ENCODE measurements at regions of chr20 and their contacts with region 1.

Region 1: DNA sequence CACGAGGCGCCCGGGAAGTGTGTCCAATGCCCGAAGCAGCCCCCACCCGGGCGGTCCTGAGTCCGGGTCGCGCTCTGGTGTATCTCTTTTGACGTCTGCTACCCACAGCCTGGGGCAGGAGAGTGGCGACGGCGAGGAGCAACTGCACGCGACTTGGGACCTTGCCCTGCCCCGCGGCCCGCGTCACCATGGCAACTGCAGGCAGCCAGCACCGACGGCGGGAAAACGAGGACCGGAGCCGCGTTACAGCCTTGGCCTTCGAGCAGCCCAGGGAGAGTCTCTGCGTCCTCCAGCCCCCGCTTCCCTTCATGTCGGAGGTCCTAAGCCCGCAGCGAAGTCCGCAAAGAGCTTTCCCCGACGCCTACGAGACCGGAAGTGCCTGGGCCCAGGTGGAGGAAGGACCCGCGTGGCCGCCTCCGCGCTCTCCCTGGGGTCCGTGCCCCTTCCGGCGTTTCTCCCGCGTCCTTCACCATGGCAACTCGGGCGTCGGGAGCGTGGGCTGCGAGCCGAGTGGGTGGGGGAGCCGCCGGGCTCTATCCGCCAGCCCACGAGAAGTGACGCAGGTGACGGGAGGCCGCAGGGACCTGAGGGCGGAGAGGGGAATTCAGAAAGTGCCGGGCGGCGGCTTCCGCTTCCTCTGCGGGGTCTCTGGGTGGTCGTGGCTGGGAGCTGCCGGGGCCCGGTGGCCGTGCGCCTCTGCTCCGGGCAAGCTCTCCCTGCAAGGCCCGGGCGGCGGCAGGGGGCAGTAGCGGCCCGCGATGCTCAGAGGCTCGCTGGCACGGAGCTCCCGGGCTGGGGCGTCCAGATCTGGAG is 88.6 kb upstream of the TGM3 start:
- DNase-seq: peak; percentile 64
- H3K4me3 Mint-ChIP-seq: peak overlapping the region; percentile 65
- H3K27ac Mint-ChIP-seq: no peak overlapping the region
- H3K4me1 Mint-ChIP-seq: no peaks in the 10 kb centered on the region
- H3K27me3 Mint-ChIP-seq: peaks cover 8% of the 10 kb centered on the region
- CTCF ChIP-seq: peak; percentile 93

Region 2: GRCh38 chr20:1389703-1390580 is 817.2 kb before region 1 on chr20:
- CTCF ChIA-PET with region 1: no interaction called
- POLR2A ChIA-PET with region 1: no interaction called
- intact Hi-C with region 1: no loop called
- DNase-seq: peak; percentile 38
- H3K4me3 Mint-ChIP-seq: peak overlapping the region; percentile 83
- H3K27ac Mint-ChIP-seq: peak overlapping the region; percentile 91
- H3K4me1 Mint-ChIP-seq: peaks cover 46% of the 10 kb centered on the region
- H3K27me3 Mint-ChIP-seq: no peaks in the 10 kb centered on the region
- CTCF ChIP-seq: no peak

Region 3: DNA sequence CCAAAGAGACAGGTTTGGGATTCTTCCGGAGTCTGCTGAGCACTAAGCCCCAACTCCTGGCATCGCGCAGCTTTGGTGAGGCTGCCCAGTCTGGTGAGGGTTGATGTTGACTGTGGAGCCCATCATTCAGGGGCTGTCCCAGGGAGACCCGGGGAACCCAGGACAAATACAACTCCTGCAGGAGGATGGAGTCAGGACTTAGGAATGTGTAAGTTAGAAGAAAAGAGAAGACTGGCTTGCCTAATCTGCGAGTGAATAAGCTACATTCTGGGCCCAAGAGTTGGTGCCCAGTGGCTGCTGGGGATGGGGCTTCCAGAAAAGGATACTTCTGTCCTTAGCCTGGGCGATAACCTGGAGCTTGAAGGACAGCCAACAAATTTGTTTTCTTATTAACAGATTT is 57.7 kb before region 1 on chr20:
- CTCF ChIA-PET with region 1: no interaction called
- POLR2A ChIA-PET with region 1: no interaction called
- intact Hi-C with region 1: no loop called
- DNase-seq: peak; percentile 18
- H3K4me3 Mint-ChIP-seq: no peak overlapping the region
- H3K27ac Mint-ChIP-seq: no peak overlapping the region
- H3K4me1 Mint-ChIP-seq: peaks cover 24% of the 10 kb centered on the region
- H3K27me3 Mint-ChIP-seq: no peaks in the 10 kb centered on the region
- CTCF ChIP-seq: no peak

Region 4: GRCh38 chr20:2217857-2218539 is 10.8 kb after region 1 on chr20:
- CTCF ChIA-PET with region 1: interaction called, 24 read pairs
- POLR2A ChIA-PET with region 1: interaction called, 4 read pairs
- intact Hi-C with region 1: no loop called
- DNase-seq: no peak
- H3K4me3 Mint-ChIP-seq: no peak overlapping the region
- H3K27ac Mint-ChIP-seq: no peak overlapping the region
- H3K4me1 Mint-ChIP-seq: no peaks in the 10 kb centered on the region
- H3K27me3 Mint-ChIP-seq: peaks cover 24% of the 10 kb centered on the region
- CTCF ChIP-seq: no peak

Region 5: DNA sequence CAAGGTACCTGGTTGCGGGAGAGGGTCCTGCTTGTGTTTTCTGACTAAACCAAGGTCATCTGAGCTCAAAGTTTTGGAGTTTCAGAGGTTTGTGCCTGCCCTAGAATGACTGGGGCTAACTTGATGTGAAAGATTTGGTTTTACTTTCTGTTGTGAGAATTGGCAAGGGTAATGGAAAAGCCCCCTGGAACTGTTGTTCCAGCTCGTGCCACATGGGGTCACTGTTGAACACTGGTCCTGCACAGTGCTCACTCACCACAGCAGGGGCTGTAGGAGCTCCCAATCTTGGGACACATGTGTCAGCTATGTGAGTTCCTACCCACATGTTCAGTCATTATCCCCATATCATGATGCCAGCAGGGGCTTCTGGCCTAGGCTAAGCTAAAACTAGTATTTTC is 180.0 kb after region 1 on chr20:
- CTCF ChIA-PET with region 1: interaction called, 14 read pairs
- POLR2A ChIA-PET with region 1: no interaction called
- intact Hi-C with region 1: no loop called
- DNase-seq: peak; percentile 56
- H3K4me3 Mint-ChIP-seq: no peak overlapping the region
- H3K27ac Mint-ChIP-seq: no peak overlapping the region
- H3K4me1 Mint-ChIP-seq: peaks cover 14% of the 10 kb centered on the region
- H3K27me3 Mint-ChIP-seq: no peaks in the 10 kb centered on the region
- CTCF ChIP-seq: peak; percentile 31

Region 6: DNA sequence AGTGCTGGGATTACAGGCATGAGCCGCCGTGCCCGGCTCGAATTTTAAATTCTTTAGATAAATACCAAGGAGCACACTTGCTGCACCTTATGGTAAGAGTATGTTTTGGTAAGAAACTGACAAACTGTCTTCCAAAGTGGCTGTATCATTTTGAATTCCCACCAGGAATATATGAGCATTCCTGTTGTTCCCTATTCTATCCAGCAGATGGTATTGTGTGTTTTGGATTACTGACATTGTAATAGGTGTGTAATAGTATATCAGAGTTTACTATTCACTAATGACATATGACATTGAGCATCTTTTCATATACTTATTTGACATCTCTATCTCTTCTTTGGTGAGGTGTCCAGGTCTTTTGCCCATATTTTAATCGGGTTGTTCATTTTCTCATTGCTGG is 214.1 kb after region 1 on chr20:
- CTCF ChIA-PET with region 1: interaction called, 10 read pairs
- POLR2A ChIA-PET with region 1: no interaction called
- intact Hi-C with region 1: no loop called
- DNase-seq: peak; percentile 24
- H3K4me3 Mint-ChIP-seq: no peak overlapping the region
- H3K27ac Mint-ChIP-seq: no peak overlapping the region
- H3K4me1 Mint-ChIP-seq: no peaks in the 10 kb centered on the region
- H3K27me3 Mint-ChIP-seq: no peaks in the 10 kb centered on the region
- CTCF ChIP-seq: peak; percentile 27

Region 7: DNA sequence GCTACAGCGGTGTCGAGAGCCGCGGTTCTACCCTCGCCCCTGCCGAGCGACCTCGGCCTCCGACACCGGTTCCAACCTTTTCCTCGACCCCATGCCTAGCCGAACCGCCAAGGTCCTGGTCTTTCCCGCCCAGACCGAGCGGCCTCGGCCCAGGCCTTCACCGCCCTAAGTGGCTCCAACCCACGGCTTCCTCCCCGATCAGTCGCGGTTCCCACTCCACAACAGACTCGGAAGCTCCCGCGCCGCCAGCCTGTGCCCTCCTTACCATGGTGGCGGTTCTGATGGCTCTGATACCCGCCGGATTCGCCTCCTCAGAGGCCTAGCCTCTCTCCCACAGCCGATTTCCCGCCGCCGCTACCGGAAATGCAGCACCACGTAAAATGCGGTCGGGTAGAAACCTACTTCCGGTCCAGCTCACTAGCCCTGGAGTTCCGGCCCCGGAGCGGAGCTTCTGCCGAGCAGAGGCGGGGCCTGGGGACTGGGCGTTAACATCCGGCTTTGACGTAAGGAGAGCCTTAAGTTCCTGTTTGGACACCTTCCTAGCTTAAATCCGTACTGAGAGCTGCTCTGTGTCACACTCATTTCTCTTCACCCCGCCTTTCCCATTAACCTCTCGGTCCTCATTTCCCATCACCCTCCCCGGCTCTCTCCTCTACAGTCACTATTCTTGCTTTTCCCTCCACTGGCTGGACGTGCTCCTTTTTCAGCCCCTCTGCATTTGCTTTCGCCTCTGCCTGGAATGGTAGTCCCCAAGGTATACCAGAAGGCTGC is 263.4 kb after region 1 on chr20 and contains the start of gene SNRPB:
- CTCF ChIA-PET with region 1: interaction called, 15 read pairs
- POLR2A ChIA-PET with region 1: interaction called, 4 read pairs
- intact Hi-C with region 1: no loop called
- DNase-seq: peak; percentile 98
- H3K4me3 Mint-ChIP-seq: peak within 1 kb of the TSS; percentile 96
- H3K27ac Mint-ChIP-seq: peak within 1 kb of the TSS; percentile 100
- H3K4me1 Mint-ChIP-seq: peaks cover 55% of the 10 kb centered on the region
- H3K27me3 Mint-ChIP-seq: no peaks in the 10 kb centered on the region
- CTCF ChIP-seq: no peak
- total RNA-seq, gene SNRPB: 236 and 240 TPM in 2 replicates

Measured in MCF 10A (cell line).